HepG2 (cell line): ENCODE measurements at regions of chr3 and their contacts with region 1.

Region 1: GRCh38 chr3:176167245-176167644 is 1030.0 kb downstream of the TBL1XR1 start:
- DNase-seq: no peak
- ATAC-seq: no peak
- H3K4me3 ChIP-seq: no peak overlapping the region
- H3K27ac ChIP-seq: no peak overlapping the region
- H3K4me1 ChIP-seq: no peaks in the 10 kb centered on the region
- H3K27me3 ChIP-seq: no peaks in the 10 kb centered on the region
- CTCF ChIP-seq: no peak
- EP300 ChIP-seq: no peak
- POLR2A ChIP-seq: no peak
- RAD21 ChIP-seq: no peak

Region 2: DNA sequence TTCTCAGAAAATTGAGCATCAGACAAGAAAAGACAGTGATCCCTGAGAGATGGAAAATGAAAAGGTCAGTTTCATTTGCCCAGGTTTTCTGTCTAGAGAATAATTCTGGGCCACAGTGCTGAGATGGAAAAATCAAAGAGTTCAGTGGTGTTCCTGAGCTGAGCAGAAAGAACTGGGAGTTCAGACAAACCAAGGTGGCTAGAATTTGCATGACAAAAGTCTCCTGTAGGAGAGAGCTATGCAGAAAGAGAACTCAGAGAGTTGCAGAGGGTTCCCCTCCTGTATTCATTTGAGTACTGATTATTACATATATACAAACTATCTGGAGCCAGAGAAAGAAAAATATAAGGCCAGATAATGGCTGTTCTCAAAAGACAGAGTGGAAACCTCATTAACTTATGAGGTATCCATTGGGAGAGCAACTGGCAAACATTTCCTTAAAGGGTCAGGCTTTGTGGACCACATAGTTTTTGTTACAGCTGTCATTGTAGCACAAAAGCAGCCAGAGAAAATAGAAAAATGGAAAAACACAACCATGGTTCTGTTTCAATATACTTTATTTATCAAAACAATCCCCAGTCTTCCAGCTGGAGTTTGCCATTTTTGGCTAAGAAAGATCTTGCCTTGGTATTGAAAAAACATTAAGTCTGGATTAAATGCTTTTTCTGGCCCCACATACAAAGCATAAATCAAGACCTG is 25.9 kb after region 1 on chr3:
- CTCF ChIA-PET with region 1: no interaction called
- POLR2A ChIA-PET with region 1: no interaction called
- in situ Hi-C with region 1: no loop called
- intact Hi-C with region 1: loop called (anchors 1 kb)
- DNase-seq: no peak
- ATAC-seq: no peak
- H3K4me3 ChIP-seq: no peak overlapping the region
- H3K27ac ChIP-seq: no peak overlapping the region
- H3K4me1 ChIP-seq: no peaks in the 10 kb centered on the region
- H3K27me3 ChIP-seq: no peaks in the 10 kb centered on the region
- CTCF ChIP-seq: no peak
- EP300 ChIP-seq: no peak
- POLR2A ChIP-seq: no peak
- RAD21 ChIP-seq: no peak

Region 3: GRCh38 chr3:176219970-176220369 is 52.7 kb after region 1 on chr3:
- CTCF ChIA-PET with region 1: no interaction called
- POLR2A ChIA-PET with region 1: no interaction called
- in situ Hi-C with region 1: no loop called
- intact Hi-C with region 1: no loop called
- DNase-seq: no peak
- ATAC-seq: no peak
- H3K4me3 ChIP-seq: no peak overlapping the region
- H3K27ac ChIP-seq: no peak overlapping the region
- H3K4me1 ChIP-seq: no peaks in the 10 kb centered on the region
- H3K27me3 ChIP-seq: no peaks in the 10 kb centered on the region
- CTCF ChIP-seq: no peak
- EP300 ChIP-seq: no peak
- POLR2A ChIP-seq: no peak
- RAD21 ChIP-seq: no peak